Right cardiac atrium (tissue), 5 donors: ENCODE measurements at regions of chr11 and their contacts with region 1.

Region 1: GRCh38 chr11:44621140-44621681 is 55.7 kb downstream of the CD82 start:
- DNase-seq: peak; percentile 82 to 92 (median 91)
- ATAC-seq: peak; percentile 77 to 81
- H3K4me3 ChIP-seq: no peak overlapping the region
- H3K27ac ChIP-seq: no peak overlapping the region
- H3K4me1 ChIP-seq: peaks cover 7% of the 10 kb centered on the region
- H3K27me3 ChIP-seq: no peaks in the 10 kb centered on the region

Region 2: DNA sequence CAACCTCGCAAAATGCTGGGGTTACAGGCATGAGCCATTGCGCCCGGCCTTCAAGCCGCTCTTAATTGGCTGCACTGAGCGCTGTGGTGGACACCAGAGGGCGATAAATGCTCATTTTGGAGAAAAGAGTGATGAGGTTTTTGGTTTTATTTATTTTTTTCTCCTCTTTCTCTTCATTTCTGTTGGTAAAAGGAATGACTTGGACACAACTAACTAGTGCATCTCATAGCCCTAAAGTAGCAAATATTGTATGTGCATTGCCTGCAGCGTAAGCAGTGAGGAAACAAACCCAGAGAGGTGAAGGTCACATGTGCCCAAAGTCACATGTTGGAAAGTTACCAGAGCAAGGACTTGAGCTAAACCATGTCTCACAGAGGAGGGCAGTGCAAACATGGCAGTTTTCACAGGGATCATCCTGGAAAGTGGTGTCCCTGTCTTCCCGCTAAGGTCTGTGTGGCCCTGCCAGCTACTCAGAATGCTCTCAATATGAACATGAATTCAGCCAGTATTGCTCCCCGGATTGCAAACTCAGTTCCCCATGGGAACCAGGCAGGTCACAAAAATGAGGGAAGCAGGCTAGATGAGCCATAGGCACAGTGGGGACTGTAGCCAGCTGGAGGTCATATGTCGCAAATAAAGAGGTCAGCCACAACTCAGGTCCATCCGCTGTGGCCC is 64.3 kb before region 1 on chr11:
- intact Hi-C with region 1: loop called in 3 of 4 experiments (anchors 1 to 2 kb)
- DNase-seq: peak; percentile 61 to 89 (median 82)
- ATAC-seq: peak; percentile 63 to 83
- H3K4me3 ChIP-seq: no peak overlapping the region
- H3K27ac ChIP-seq: no peak overlapping the region
- H3K4me1 ChIP-seq: peaks cover 3% of the 10 kb centered on the region
- H3K27me3 ChIP-seq: no peaks in the 10 kb centered on the region

Region 3: DNA sequence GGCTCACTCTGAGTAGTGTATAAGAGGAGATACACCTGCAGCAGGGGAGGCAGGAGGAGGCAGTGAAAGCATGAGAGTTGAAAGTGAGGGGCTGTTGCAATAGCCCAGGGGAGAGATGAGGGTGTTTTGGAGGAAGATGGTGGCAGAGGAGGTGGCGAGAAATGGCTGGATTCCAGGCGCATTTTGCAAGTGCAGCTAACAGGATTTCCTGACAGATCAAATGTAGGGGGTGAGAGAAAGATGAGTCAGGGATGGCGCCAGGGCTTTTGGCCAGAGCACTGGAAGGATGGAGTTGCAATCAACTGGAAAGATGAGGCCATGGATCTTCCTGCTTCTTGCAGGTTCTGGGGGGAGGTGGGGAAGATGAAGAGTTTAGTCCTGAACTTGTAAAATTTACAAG is 88.8 kb after region 1 on chr11:
- intact Hi-C with region 1: loop called in 1 of 4 experiments (anchors 10 kb)
- DNase-seq: no peak
- ATAC-seq: no peak
- H3K4me3 ChIP-seq: no peak overlapping the region
- H3K27ac ChIP-seq: no peak overlapping the region
- H3K4me1 ChIP-seq: peaks cover 1% of the 10 kb centered on the region
- H3K27me3 ChIP-seq: no peaks in the 10 kb centered on the region

Region 4: GRCh38 chr11:44893846-44894617 is 272.8 kb after region 1 on chr11:
- intact Hi-C with region 1: loop called in 3 of 4 experiments (anchors 5 kb)
- DNase-seq: peak; percentile 80 to 90 (median 90)
- ATAC-seq: peak; percentile 85 to 92
- H3K4me3 ChIP-seq: no peak overlapping the region
- H3K27ac ChIP-seq: peak overlapping the region; percentile 73
- H3K4me1 ChIP-seq: peaks cover 10% of the 10 kb centered on the region
- H3K27me3 ChIP-seq: no peaks in the 10 kb centered on the region

Region 5: DNA sequence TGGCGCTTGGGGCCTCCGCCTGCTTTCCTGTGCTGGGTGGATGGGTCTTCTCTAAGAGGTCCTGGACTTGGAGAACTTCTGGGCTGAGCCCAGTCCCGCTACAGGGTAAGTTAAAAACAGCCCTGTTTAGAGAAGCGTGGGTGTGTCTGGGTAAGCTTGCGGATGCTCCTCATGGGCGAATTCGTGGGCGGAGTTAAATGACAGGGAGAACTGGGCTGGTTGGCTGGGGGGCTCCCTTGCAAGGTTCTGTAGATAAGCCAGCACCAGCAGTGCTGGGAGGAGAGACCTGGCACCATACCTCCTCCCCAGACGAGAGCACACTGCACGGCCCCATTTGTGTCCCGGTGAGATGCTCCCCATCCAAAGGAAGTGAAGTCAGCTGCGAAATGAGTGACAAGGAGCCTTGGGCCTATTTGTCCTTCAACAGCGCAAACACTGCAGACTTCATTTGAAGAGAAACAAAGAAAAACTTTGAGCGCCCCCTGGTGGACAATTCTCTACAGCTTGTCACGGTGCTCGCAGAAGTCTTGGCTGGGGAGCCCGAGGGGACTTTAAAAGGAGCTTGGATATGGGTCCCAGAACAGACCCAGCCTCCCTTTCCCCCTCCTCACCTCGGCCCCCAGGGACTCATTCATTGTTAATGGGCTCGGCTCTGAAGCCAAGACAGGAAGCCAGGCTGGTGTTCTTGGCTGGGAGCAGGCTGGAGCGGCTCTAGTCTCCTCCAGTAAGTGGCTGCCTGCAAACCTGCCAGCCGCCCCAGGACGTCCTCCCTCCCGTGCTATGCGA is 290.0 kb after region 1 on chr11:
- intact Hi-C with region 1: loop called (anchors 1 to 5 kb)
- DNase-seq: peak; percentile 85 to 91 (median 87)
- ATAC-seq: peak; percentile 78 to 83
- H3K4me3 ChIP-seq: no peak overlapping the region
- H3K27ac ChIP-seq: peak overlapping the region; percentile 33
- H3K4me1 ChIP-seq: peaks cover 2% of the 10 kb centered on the region
- H3K27me3 ChIP-seq: no peaks in the 10 kb centered on the region

Region 6: DNA sequence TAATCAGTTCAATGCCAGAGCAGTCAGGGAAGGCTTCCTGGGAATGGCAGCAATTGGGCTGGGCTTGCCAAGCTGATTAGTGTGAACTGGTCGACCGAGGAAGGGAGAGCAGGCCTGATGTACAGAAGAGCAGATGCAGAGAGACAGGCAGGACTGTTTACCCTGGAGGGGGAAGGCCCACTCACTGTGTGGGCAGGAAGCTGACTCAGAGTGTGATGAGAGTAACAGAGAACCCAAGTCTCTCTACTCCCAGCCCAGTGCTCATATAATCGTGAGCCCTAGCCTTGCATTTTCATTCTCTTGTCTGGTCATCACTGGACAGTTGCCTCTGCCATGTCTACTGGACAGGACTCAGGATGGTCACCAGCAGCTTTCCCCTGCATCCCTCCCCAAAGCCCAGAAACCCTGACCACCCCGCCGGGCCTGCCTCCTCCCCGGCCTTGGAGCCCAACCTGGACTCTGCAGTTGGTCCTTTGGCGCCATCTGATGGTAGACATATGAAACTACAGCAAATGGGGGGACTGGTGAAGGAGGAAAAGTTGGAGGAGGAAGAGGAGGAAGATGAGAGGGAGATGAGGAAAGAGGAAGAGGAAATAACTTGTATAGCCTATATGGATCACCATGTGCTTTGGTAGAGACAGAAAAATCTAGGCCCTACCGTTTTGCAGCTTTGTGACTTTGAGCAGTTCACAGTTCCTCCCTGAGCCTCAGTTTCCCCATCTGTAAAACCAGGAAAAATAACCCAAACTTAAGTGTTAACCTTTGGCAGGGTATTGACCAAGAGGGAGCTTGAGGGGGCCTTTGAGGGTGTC is 481.8 kb after region 1 on chr11:
- intact Hi-C with region 1: loop called in 2 of 4 experiments (anchors 5 kb)
- DNase-seq: peak; percentile 59 to 79 (median 76)
- ATAC-seq: peak; percentile 60 to 65
- H3K4me3 ChIP-seq: no peak overlapping the region
- H3K27ac ChIP-seq: no peak overlapping the region
- H3K4me1 ChIP-seq: no peaks in the 10 kb centered on the region
- H3K27me3 ChIP-seq: no peaks in the 10 kb centered on the region